GM12878 (cell line): ENCODE measurements at regions of chr5 and their contacts with region 1.

Region 1: GRCh38 chr5:60382716-60383115 is 317.2 kb downstream of the DEPDC1B start:
- DNase-seq: peak; percentile 40
- ATAC-seq: peak; percentile 57
- H3K4me3 ChIP-seq: no peak overlapping the region
- H3K27ac ChIP-seq: no peak overlapping the region
- H3K4me1 ChIP-seq: peaks cover 7% of the 10 kb centered on the region
- H3K27me3 ChIP-seq: no peaks in the 10 kb centered on the region
- CTCF ChIP-seq: peak; percentile 38 to 56 (median 46); a peak in 5 of 6 replicates
- EP300 ChIP-seq: no peak
- POLR2A ChIP-seq: no peak
- RAD21 ChIP-seq: peak; percentile 83

Region 2: GRCh38 chr5:60207040-60207439 is 175.7 kb before region 1 on chr5:
- CTCF ChIA-PET with region 1: no interaction called
- POLR2A ChIA-PET with region 1: no interaction called
- RAD21 ChIA-PET with region 1: no interaction called
- SMC1A ChIA-PET with region 1: no interaction called
- in situ Hi-C with region 1: no loop called
- intact Hi-C with region 1: loop called (anchors 5 kb)
- DNase-seq: peak; percentile 40
- ATAC-seq: peak; percentile 89
- H3K4me3 ChIP-seq: no peak overlapping the region
- H3K27ac ChIP-seq: no peak overlapping the region
- H3K4me1 ChIP-seq: no peaks in the 10 kb centered on the region
- H3K27me3 ChIP-seq: no peaks in the 10 kb centered on the region
- CTCF ChIP-seq: no peak
- EP300 ChIP-seq: peak in 1 of 2 experiments; percentile 47; a peak in 1 of 4 replicates
- POLR2A ChIP-seq: no peak
- RAD21 ChIP-seq: no peak

Region 3: GRCh38 chr5:60287174-60287771 is 95.4 kb before region 1 on chr5:
- CTCF ChIA-PET with region 1: interaction called, 13 read pairs
- POLR2A ChIA-PET with region 1: no interaction called
- RAD21 ChIA-PET with region 1: interaction called, 5 read pairs
- SMC1A ChIA-PET with region 1: interaction called, 4 read pairs
- in situ Hi-C with region 1: no loop called
- intact Hi-C with region 1: no loop called
- DNase-seq: no peak
- ATAC-seq: peak; percentile 98
- H3K4me3 ChIP-seq: no peak overlapping the region
- H3K27ac ChIP-seq: no peak overlapping the region
- H3K4me1 ChIP-seq: no peaks in the 10 kb centered on the region
- H3K27me3 ChIP-seq: no peaks in the 10 kb centered on the region
- CTCF ChIP-seq: peak; percentile 70 to 82 (median 72)
- EP300 ChIP-seq: no peak
- POLR2A ChIP-seq: no peak
- RAD21 ChIP-seq: peak; percentile 64

Region 4: GRCh38 chr5:60354311-60354710 is 28.4 kb before region 1 on chr5:
- CTCF ChIA-PET with region 1: no interaction called
- POLR2A ChIA-PET with region 1: no interaction called
- RAD21 ChIA-PET with region 1: no interaction called
- SMC1A ChIA-PET with region 1: no interaction called
- in situ Hi-C with region 1: no loop called
- intact Hi-C with region 1: no loop called
- DNase-seq: no peak
- ATAC-seq: no peak
- H3K4me3 ChIP-seq: no peak overlapping the region
- H3K27ac ChIP-seq: no peak overlapping the region
- H3K4me1 ChIP-seq: no peaks in the 10 kb centered on the region
- H3K27me3 ChIP-seq: no peaks in the 10 kb centered on the region
- CTCF ChIP-seq: no peak
- EP300 ChIP-seq: no peak
- POLR2A ChIP-seq: no peak
- RAD21 ChIP-seq: no peak

Region 5: DNA sequence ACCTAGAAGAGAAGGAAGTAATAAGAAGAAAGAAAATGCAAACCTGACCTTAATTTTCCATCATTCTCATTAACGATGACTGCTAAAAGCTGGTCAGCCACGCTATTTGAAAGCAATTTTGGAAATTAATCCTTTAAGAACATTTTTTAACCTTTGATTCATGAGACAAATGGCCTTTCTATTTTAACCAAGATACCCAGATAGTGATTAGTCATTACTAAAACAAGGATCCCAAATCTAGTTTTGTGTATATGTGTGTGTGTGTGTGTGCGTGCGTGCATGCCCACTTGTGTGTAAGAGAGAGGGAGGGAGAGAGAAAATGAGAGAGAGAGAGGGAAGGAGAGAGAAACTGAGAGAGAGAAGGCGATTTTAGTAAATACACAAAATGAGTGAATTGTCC is 12.2 kb before region 1 on chr5:
- CTCF ChIA-PET with region 1: interaction called, 4 read pairs
- POLR2A ChIA-PET with region 1: no interaction called
- RAD21 ChIA-PET with region 1: interaction called, 5 read pairs
- SMC1A ChIA-PET with region 1: interaction called, 10 read pairs
- in situ Hi-C with region 1: no loop called
- intact Hi-C with region 1: no loop called
- DNase-seq: no peak
- ATAC-seq: no peak
- H3K4me3 ChIP-seq: no peak overlapping the region
- H3K27ac ChIP-seq: no peak overlapping the region
- H3K4me1 ChIP-seq: no peaks in the 10 kb centered on the region
- H3K27me3 ChIP-seq: no peaks in the 10 kb centered on the region
- CTCF ChIP-seq: no peak
- EP300 ChIP-seq: no peak
- POLR2A ChIP-seq: no peak
- RAD21 ChIP-seq: no peak

Region 6: DNA sequence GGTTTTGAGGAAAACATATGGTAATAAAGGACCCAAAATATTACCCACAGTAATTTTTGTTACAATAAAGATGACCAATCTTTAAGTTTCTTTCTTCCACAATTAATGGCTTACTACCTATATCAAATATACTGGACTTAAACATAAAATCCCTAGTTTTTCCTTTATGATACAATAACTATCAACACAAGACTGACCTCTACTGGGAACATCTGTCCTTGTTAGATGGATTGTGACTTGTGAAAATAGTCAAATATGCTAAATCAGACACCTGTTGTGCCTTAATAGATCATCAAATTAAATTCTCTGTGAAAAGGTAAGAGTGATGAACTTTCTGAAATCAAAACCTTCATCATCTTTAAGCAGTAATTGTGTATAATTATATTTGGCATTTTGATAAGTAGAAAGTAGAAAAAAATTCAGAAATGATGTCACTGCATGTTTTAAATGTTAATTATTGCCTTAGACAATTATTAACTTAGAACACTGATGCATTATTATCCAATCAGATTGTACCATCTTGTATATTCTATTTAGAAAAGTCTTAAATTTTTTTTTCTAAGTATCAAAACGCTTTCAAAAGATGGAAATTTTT is 203.7 kb after region 1 on chr5:
- CTCF ChIA-PET with region 1: interaction called, 4 read pairs
- POLR2A ChIA-PET with region 1: no interaction called
- RAD21 ChIA-PET with region 1: interaction called, 3 read pairs
- SMC1A ChIA-PET with region 1: interaction called, 3 read pairs
- in situ Hi-C with region 1: no loop called
- intact Hi-C with region 1: loop called (anchors 5 kb)
- DNase-seq: no peak
- ATAC-seq: peak; percentile 38; the same call in 2 of the 3 replicates
- H3K4me3 ChIP-seq: no peak overlapping the region
- H3K27ac ChIP-seq: no peak overlapping the region
- H3K4me1 ChIP-seq: peaks cover 8% of the 10 kb centered on the region; the same call in 1 of the 2 replicates
- H3K27me3 ChIP-seq: no peaks in the 10 kb centered on the region
- CTCF ChIP-seq: peak; percentile 32 to 55 (median 53); a peak in 5 of 6 replicates
- EP300 ChIP-seq: no peak
- POLR2A ChIP-seq: no peak
- RAD21 ChIP-seq: peak; percentile 78